ENCODE measurements at regions of chr17 and their contacts with region 1.

Region 1: DNA sequence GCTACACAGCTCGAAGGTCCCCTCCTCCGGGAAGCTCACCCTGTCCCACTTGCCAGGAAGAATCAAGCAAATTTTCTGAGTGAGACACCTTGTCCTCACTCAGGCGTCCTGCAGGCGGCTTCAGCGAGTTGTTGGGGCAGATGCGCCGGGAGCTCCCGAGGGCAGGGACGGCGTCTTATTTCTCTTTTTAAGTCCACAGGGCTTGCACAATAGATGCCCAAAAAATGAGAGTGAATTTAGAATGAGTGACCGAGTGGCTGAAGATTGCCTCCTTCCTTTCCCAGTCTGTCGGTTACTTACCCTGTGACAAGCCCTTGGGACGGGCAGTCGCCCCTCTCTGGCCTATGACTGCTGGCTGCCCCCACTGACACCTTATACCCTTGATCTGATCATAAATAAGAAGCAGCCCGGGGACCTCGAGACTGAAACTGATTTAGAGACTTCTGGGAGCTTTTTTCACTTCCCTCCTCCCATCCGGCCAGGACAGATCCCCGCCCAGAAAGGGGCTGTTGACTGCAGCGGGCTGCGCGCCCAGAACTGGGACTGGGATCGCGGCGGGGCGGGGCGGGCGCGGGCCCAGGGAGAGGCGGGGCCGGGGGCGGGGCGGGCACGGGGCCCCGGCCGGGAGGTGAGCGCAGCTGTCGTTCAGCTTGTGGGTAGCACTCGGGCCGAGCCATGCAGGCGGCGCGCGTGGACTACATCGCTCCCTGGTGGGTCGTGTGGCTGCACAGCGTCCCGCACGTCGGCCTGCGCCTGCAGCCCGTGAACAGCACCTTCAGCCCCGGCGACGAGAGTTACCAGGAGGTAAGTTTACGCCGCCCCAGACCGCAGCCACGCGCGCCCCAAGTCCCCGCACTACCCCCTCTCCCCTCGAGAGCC is at the start of gene TTYH2:
- DNase-seq: peak; percentile 87 to 90
- ATAC-seq: peak; percentile 65 to 70
- H3K4me3 ChIP-seq: peak within 1 kb of the TSS; percentile 63 to 89 (median 69)
- H3K27ac ChIP-seq: peak within 1 kb of the TSS; percentile 88 to 96 (median 94)
- H3K4me1 ChIP-seq: peaks cover 68% of the 10 kb centered on the region in 2 donors
- H3K27me3 ChIP-seq: no peaks in the 10 kb centered on the region
- CTCF ChIP-seq: peak; percentile 27 to 49 (median 30)
- POLR2A ChIP-seq: peak; percentile 73 to 75
- total RNA-seq, gene TTYH2: 4.7 to 19.2 (median 11.4) TPM

Region 2: GRCh38 chr17:73731733-73732132 is 481.4 kb before region 1 on chr17:
- in situ Hi-C with region 1: no loop called
- intact Hi-C with region 1: no loop called
- DNase-seq: no peak
- ATAC-seq: no peak
- H3K4me3 ChIP-seq: no peak overlapping the region
- H3K27ac ChIP-seq: no peak overlapping the region
- H3K4me1 ChIP-seq: no peaks in the 10 kb centered on the region
- H3K27me3 ChIP-seq: peaks cover 0 to 11% (median 6%) of the 10 kb centered on the region in 3 donors
- CTCF ChIP-seq: no peak
- POLR2A ChIP-seq: no peak

Region 3: GRCh38 chr17:74192950-74193781 is 20.0 kb before region 1 on chr17:
- in situ Hi-C with region 1: no loop called
- intact Hi-C with region 1: no loop called
- DNase-seq: peak; percentile 45 to 55
- ATAC-seq: peak in 1 of 2 donors; percentile 20
- H3K4me3 ChIP-seq: no peak overlapping the region
- H3K27ac ChIP-seq: no peak overlapping the region
- H3K4me1 ChIP-seq: no peaks in the 10 kb centered on the region
- H3K27me3 ChIP-seq: peaks cover 12 to 20% (median 17%) of the 10 kb centered on the region in 3 donors
- CTCF ChIP-seq: no peak
- POLR2A ChIP-seq: no peak

Region 4: GRCh38 chr17:74368092-74369081 is 155.2 kb after region 1 on chr17:
- in situ Hi-C with region 1: loop called in 3 of 4 experiments (anchors 10 to 25 kb)
- intact Hi-C with region 1: loop called (anchors 10 kb)
- DNase-seq: peak; percentile 61 to 71
- ATAC-seq: peak; percentile 86 to 90
- H3K4me3 ChIP-seq: no peak overlapping the region
- H3K27ac ChIP-seq: no peak overlapping the region
- H3K4me1 ChIP-seq: peaks cover 0 to 7% of the 10 kb centered on the region in 2 donors
- H3K27me3 ChIP-seq: no peaks in the 10 kb centered on the region
- CTCF ChIP-seq: peak; percentile 90 to 98 (median 96)
- POLR2A ChIP-seq: no peak

Region 5: GRCh38 chr17:74457146-74457819 is 244.1 kb after region 1 on chr17:
- in situ Hi-C with region 1: loop called in 1 of 4 experiments (anchors 10 kb)
- intact Hi-C with region 1: no loop called
- DNase-seq: peak in 1 of 2 donors; percentile 78
- ATAC-seq: peak; percentile 24 to 28
- H3K4me3 ChIP-seq: peak overlapping the region in 2 of 4 donors; percentile 25 to 39
- H3K27ac ChIP-seq: peak overlapping the region; percentile 58 to 97 (median 69)
- H3K4me1 ChIP-seq: peaks cover 29 to 36% of the 10 kb centered on the region in 2 donors
- H3K27me3 ChIP-seq: no peaks in the 10 kb centered on the region
- CTCF ChIP-seq: peak; percentile 98 to 99 (median 98)
- POLR2A ChIP-seq: no peak

Region 6: DNA sequence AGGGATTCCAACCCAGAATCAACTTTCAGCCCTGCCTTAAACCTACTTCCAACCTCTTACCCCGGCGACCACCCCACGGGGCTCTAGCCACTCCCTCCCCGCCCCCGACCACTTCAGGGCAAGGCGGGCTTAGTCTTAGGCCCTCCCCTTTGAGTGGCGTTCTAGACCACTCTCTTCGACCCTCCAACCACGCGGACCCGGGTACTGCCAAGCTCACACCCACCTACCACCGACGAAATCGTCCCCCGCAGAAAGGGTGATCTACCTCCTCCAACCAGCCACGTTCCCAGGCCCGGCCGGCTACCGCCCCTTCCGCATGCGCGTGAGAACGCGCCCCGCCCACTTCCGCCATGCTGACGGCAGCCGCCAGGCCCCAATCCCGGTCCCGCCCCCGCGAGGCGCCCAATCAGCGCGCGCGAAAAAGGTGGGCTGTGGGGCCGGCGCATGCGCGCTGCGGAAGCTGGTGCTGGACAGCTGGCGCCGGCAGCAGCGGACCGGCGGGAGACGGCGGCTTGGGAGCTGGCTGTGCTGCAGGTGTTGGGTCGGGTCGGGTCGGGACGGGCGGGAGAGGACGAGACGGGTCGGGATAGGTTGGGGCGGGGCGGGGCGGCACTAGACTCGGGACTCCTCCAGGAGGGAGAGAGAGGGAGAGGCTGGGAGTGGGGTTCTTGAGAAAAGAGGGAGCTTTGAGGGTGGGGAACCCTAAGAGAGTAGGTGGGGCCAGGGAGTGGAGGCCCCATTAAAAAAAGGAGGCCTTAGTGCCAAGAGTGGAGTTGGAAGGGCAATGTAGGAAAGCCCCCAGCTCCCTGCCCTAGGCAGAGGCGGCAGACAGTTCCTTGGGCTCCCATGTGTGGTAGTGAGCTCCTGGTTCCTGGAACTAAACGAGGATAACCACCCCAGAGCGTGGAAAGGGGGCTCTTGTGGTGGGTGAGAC is 563.2 kb after region 1 on chr17 and contains the start of gene NAT9:
- in situ Hi-C with region 1: no loop called
- intact Hi-C with region 1: loop called (anchors 10 kb)
- DNase-seq: peak; percentile 93 to 96
- ATAC-seq: peak; percentile 95 to 96
- H3K4me3 ChIP-seq: peak within 1 kb of the TSS; percentile 75 to 99 (median 93)
- H3K27ac ChIP-seq: peak within 1 kb of the TSS; percentile 84 to 91 (median 87)
- H3K4me1 ChIP-seq: peaks cover 17 to 23% of the 10 kb centered on the region in 2 donors
- H3K27me3 ChIP-seq: no peaks in the 10 kb centered on the region
- CTCF ChIP-seq: no peak
- POLR2A ChIP-seq: peak; percentile 65 to 77
- total RNA-seq, gene NAT9: 7.7 to 27.4 (median 14.5) TPM